A549 (cell line): ENCODE measurements at regions of chr21 and their contacts with region 1.

Region 1: GRCh38 chr21:35390013-35390776 is 341.1 kb upstream of the RUNX1 start:
- DNase-seq: no peak
- ATAC-seq: no peak
- H3K4me3 ChIP-seq: no peak overlapping the region
- H3K27ac ChIP-seq: no peak overlapping the region
- H3K4me1 ChIP-seq: no peaks in the 10 kb centered on the region
- CTCF ChIP-seq: no peak
- EP300 ChIP-seq: no peak
- POLR2A ChIP-seq: no peak
- RAD21 ChIP-seq: no peak

Region 2: DNA sequence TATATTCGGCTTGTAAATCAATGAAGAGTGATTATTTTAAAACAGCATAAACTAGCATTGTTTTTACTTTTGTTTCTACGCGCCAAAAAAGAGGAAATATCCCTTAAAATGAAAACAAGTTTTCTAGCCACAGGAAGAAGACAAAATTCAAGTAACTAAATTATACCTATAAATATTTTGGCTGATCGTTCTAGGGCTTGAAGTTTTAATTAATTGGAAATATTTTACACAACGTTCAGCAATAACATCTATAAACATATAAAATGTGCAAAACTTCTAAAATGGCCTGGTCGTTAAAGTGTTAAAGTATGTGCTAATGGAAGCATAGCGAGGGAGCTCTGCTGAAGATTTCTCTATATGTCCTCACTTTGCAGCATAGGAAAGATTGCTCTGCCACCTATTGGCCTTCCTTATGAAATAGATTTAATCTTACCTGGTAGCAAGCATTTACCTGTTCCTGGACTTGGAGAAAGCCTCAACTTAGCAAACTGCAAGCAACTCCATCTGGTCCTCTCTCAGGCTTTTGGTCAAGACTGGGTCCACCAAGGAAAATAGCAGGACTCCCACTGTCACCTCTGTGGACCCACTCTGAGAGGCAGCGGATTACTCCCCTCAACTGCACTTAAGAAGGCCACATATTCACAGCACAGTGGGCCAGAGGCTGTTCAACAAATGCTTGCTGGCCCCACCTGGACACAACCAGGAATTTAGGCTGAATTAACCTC is 10.2 kb after region 1 on chr21:
- CTCF ChIA-PET with region 1: interaction called, 15 read pairs
- POLR2A ChIA-PET with region 1: no interaction called
- DNase-seq: peak; percentile 5 to 65
- ATAC-seq: peak; percentile 75 to 85
- H3K4me3 ChIP-seq: no peak overlapping the region
- H3K27ac ChIP-seq: no peak overlapping the region
- H3K4me1 ChIP-seq: peaks cover 5% of the 10 kb centered on the region; the same call in 1 of the 3 replicates
- CTCF ChIP-seq: peak; percentile 63
- EP300 ChIP-seq: no peak
- POLR2A ChIP-seq: no peak
- RAD21 ChIP-seq: peak; percentile 83 to 87